ENCODE measurements at regions of chr17 and their contacts with region 1.

Region 1: DNA sequence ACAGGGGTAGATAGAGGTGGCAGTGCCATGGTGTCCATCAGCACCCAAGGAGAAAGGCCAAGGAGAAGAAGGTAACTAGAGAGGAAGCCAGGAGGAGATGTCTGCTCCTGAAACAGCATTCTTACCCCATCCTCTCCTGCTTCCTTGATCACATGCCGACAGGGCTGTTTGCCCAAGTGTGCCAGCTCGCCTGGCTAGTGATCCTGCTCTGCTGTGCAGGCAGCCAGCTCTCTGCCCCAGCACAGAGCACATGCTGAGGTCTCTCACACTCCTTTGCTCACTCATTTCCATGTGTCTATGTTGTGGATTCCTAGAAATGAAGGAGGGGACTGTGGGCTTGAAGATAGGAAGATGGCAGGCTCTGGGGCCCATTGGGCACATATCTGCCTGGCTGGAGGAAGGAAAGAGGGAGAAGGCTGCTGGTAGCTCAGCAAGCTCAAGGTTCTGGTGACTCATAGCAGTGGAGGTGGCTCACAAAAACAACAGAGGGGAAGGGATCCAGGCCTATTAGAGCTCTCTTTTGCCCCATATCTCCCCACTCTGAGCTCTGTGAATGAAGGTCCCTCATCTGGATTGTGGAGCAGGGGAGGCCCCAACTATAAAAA is 54.3 kb downstream of the NEUROD2 start:
- DNase-seq: no peak
- ATAC-seq: no peak
- H3K4me3 ChIP-seq: no peak overlapping the region
- H3K27ac ChIP-seq: no peak overlapping the region
- H3K4me1 ChIP-seq: no peaks in the 10 kb centered on the region
- H3K27me3 ChIP-seq: no peaks in the 10 kb centered on the region
- CTCF ChIP-seq: no peak
- POLR2A ChIP-seq: no peak

Region 2: DNA sequence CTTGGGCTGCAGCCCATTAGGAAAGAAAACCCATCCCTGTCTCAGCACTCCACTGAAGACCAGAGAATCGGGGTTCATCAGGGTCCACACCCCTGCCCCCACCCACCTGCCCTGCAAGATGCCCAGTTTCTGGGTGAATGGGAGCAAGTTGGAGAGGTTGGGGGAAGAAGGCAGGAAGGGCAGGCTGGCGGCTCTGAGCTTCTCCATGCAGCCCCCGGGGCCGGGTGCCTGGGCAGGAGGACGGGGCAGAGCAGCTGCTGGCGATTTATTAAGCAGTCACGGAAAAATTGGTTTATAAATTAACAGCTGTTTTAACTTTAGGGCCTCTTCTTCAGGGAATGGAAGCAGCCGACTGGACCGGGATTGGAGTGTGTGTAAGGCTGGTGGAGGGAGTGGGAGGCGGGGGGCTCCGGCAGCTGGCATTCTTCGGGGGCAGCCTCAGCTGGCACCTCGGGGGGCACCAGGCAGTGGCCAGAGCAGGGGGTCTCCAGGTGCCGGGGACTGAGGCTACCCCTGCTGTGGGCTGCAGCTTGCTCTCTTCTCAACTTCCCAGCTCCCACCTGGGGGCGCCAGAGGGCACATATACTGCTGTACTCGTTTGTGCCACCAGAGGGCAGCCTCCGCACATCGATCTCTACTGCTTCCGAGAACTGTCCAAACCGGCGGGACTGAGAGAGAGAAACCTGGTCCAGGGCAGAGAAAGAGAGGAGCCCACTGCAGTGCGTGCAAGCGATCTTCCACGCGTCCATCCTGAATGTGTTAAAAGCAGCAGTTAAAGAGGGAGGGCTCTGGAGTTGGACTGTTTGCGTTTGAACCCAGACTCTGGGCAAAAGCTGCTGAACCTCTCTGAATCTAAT is 68.3 kb after region 1 on chr17:
- intact Hi-C with region 1: loop called (anchors 5 kb)
- DNase-seq: peak; percentile 85 to 89 (median 86)
- ATAC-seq: peak; percentile 62
- H3K4me3 ChIP-seq: no peak overlapping the region
- H3K27ac ChIP-seq: no peak overlapping the region
- H3K4me1 ChIP-seq: peaks cover 54% of the 10 kb centered on the region
- H3K27me3 ChIP-seq: peaks cover 0 to 5% of the 10 kb centered on the region in 2 donors
- CTCF ChIP-seq: peak; percentile 95 to 100 (median 100)
- POLR2A ChIP-seq: no peak

Region 3: DNA sequence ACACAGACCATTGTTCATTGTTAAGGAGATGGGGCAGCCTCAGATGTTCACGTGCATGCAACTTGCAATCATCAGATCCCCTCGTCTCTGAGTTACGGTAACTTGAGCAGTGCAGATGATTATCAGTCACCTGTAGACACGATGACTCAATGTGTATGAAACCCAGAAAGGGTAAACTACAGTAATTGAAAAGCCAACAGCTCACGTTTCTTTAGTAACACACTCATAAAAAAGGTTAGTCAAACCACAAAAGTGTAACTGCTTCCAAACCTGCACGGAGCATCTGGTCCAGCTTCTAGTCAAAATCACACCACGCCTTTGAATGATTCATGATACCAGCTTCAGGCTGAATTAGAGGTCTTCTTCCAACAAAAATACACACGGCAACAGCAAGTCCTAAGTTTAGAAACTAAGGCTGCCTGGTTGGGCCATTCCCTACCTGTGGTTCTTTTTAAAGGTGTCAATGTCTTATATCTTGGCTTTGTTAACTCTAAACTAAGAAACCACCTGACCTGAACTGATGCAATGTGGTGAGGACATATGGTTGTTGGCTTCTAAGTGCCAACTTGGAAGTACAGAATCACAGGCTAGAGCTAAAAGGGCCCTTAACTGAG is 216.6 kb after region 1 on chr17:
- intact Hi-C with region 1: no loop called
- DNase-seq: no peak
- ATAC-seq: no peak
- H3K4me3 ChIP-seq: no peak overlapping the region
- H3K27ac ChIP-seq: no peak overlapping the region
- H3K4me1 ChIP-seq: no peaks in the 10 kb centered on the region
- H3K27me3 ChIP-seq: no peaks in the 10 kb centered on the region
- CTCF ChIP-seq: no peak
- POLR2A ChIP-seq: no peak